A673 (cell line): ENCODE measurements at regions of chr17 and their contacts with region 1.

Region 1: DNA sequence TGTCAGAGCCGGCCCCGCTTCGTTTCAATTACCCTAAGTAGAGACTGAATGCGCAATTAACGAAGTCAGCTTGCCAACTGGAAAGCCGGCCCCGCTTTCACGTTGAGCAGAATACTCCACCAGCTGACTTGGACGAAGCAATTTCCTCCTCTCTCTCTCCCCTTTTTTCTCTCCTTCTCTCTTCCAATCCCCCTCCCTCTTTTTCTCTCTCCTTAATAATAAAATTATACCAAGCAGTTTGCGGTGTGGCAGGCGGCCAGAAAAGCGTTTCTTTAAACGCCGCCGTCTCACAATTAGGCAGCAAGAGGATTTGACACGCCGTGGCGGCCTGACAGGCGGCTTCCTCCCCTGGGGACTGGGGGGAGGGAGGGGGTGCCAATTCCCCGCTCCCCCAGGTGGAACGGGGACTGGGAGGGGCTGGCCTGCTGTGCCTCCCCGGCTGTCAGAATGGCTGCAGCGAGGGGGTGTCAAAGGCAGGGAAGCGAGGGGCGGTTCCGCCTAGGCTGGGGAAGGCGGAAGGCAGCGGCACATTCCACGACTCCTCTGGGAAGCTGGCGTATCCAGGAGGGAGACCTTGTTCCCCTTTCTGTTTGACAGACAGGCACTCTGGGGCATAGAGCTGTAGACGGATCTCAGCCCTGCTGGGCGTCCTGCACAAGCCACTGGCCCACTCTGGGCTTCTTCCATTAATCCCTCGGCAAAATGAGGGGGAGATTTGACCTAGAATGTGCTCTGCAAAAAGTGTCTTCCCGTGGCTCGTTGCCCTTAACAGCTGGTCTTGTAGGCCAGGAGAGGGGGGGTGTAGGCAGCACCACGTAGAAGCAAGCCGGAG is 52.7 kb downstream of the SREBF1 start:
- DNase-seq: peak; percentile 99
- H3K4me3 ChIP-seq: peak overlapping the region; percentile 63
- H3K27ac ChIP-seq: peak overlapping the region; percentile 86
- H3K4me1 ChIP-seq: peaks cover 74% of the 10 kb centered on the region
- H3K27me3 ChIP-seq: no peaks in the 10 kb centered on the region
- CTCF ChIP-seq: no peak

Region 2: GRCh38 chr17:17401271-17401781 is 382.7 kb before region 1 on chr17:
- CTCF ChIA-PET with region 1: no interaction called
- POLR2A ChIA-PET with region 1: no interaction called
- intact Hi-C with region 1: no loop called
- DNase-seq: peak; percentile 30
- H3K4me3 ChIP-seq: no peak overlapping the region
- H3K27ac ChIP-seq: no peak overlapping the region
- H3K4me1 ChIP-seq: no peaks in the 10 kb centered on the region
- H3K27me3 ChIP-seq: no peaks in the 10 kb centered on the region
- CTCF ChIP-seq: peak; percentile 53

Region 3: GRCh38 chr17:17580662-17581470 is 203.2 kb before region 1 on chr17:
- CTCF ChIA-PET with region 1: interaction called, 10 read pairs
- POLR2A ChIA-PET with region 1: no interaction called
- intact Hi-C with region 1: no loop called
- DNase-seq: no peak
- H3K4me3 ChIP-seq: no peak overlapping the region
- H3K27ac ChIP-seq: no peak overlapping the region
- H3K4me1 ChIP-seq: no peaks in the 10 kb centered on the region
- H3K27me3 ChIP-seq: no peaks in the 10 kb centered on the region
- CTCF ChIP-seq: no peak

Region 4: DNA sequence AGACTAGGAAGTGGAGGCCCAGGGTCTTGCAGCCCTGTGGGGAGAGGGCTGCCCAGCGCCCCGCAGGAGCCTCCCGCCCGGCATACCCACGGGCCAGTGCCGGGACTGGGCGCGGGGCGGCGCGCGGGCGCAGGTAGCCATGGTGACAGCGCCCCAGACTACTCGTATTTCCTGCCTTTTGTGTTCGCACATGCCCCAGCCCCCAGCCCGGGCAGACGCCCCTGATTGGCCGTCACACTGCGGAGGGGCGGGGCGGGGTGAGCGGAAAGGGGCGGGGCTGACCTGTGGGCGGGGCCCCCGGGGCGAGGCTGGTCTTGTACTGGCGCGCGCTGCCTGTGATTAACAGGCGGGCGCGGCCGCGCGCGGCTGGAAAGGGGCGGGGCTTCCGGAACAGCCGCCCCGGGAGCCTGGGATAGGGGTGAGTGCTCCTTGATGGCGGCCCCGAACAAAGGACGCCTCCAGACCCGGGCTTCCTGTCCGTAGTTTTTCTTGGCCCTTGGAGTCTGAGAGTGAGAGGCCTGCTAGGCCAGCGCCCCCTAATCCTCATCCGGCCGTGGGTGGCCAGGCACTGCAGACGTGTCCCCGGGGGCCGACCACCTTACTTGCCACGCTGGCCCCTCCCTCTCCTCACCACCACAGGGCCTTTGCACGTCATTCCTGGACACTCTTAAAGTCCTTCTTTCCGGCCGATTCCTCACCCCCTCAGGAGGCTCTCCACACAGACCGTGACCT is 31.8 kb before region 1 on chr17:
- CTCF ChIA-PET with region 1: interaction called, 3 read pairs
- POLR2A ChIA-PET with region 1: no interaction called
- intact Hi-C with region 1: loop called (anchors 1 kb)
- DNase-seq: peak; percentile 97
- H3K4me3 ChIP-seq: peak overlapping the region; percentile 45
- H3K27ac ChIP-seq: peak overlapping the region; percentile 89
- H3K4me1 ChIP-seq: peaks cover 49% of the 10 kb centered on the region
- H3K27me3 ChIP-seq: no peaks in the 10 kb centered on the region
- CTCF ChIP-seq: peak; percentile 56